IMR-90 (cell line): ENCODE measurements at regions of chr2 and their contacts with region 1.

Region 1: GRCh38 chr2:217510771-217511291 is 492.0 kb downstream of the TNS1 start:
- DNase-seq: peak; percentile 93
- ATAC-seq: peak; percentile 93
- H3K4me3 ChIP-seq: no peak overlapping the region
- H3K27ac ChIP-seq: peak overlapping the region; percentile 87
- H3K4me1 ChIP-seq: peaks cover 17% of the 10 kb centered on the region
- H3K27me3 ChIP-seq: no peaks in the 10 kb centered on the region
- CTCF ChIP-seq: peak; percentile 91
- POLR2A ChIP-seq: 0 out of 2 replicates have a peak, but pooled peaks have one; percentile 28
- RAD21 ChIP-seq: peak; percentile 97

Region 2: GRCh38 chr2:216519154-216519762 is 991.6 kb before region 1 on chr2:
- CTCF ChIA-PET with region 1: no interaction called
- POLR2A ChIA-PET with region 1: no interaction called
- dilution Hi-C with region 1: loop called (anchors 25 kb)
- in situ Hi-C with region 1: loop called (anchors 25 kb)
- intact Hi-C with region 1: no loop called
- DNase-seq: peak; percentile 89
- ATAC-seq: peak; percentile 85
- H3K4me3 ChIP-seq: no peak overlapping the region
- H3K27ac ChIP-seq: no peak overlapping the region
- H3K4me1 ChIP-seq: peaks cover 7% of the 10 kb centered on the region
- H3K27me3 ChIP-seq: no peaks in the 10 kb centered on the region
- CTCF ChIP-seq: peak; percentile 80
- POLR2A ChIP-seq: no peak
- RAD21 ChIP-seq: peak; percentile 86

Region 3: DNA sequence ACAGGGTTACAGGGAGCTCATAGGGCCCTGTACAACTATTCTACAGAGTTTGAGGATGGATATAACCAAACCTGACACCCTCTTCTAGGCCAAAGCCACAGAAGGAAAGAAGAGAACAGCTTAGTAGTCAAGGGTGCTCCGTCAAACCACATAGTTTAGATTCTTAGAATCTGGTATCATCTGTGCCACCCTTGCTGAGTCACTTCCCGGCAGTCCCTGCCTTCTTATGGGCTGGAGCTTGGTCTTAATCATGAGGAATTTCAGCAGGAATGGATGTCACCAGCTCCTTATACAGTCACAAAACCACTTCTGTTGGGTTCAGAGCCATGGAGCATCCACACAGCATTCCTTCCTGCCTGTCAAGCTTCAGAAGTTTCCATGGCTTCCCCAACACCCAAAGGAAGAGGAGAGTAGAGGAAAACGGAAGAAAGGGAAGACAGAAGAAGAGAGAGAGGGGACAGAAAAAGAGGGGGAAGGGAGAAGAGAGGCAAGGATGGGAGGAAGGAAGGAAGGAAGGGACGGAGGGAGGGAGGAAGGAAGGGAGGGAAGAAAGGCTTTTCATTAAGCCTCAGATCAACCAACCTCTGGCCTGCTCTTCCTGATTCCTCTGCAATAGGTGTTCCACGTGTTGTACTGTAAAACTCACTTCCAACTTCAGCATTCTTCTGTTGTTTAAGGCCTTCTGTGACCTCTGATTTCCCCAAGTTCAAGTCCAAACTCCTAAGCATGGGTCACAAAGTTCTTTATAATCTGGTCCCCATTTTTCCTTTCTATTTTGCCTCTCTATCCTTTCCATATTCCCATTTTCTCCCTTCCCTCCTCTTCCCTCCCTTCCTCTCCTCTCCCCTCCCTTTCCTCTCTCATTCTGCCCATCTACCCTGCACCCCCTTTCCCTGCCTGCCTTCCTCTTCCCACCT is 404.8 kb before region 1 on chr2:
- CTCF ChIA-PET with region 1: no interaction called
- POLR2A ChIA-PET with region 1: no interaction called
- dilution Hi-C with region 1: no loop called
- in situ Hi-C with region 1: no loop called
- intact Hi-C with region 1: loop called (anchors 1 kb)
- DNase-seq: peak; percentile 95
- ATAC-seq: peak; percentile 86
- H3K4me3 ChIP-seq: no peak overlapping the region
- H3K27ac ChIP-seq: peak overlapping the region; percentile 99
- H3K4me1 ChIP-seq: peaks cover 23% of the 10 kb centered on the region
- H3K27me3 ChIP-seq: no peaks in the 10 kb centered on the region
- CTCF ChIP-seq: no peak
- POLR2A ChIP-seq: peak; percentile 68; the same call in 1 of the 2 replicates
- RAD21 ChIP-seq: peak; percentile 11; the same call in 1 of the 2 replicates

Region 4: DNA sequence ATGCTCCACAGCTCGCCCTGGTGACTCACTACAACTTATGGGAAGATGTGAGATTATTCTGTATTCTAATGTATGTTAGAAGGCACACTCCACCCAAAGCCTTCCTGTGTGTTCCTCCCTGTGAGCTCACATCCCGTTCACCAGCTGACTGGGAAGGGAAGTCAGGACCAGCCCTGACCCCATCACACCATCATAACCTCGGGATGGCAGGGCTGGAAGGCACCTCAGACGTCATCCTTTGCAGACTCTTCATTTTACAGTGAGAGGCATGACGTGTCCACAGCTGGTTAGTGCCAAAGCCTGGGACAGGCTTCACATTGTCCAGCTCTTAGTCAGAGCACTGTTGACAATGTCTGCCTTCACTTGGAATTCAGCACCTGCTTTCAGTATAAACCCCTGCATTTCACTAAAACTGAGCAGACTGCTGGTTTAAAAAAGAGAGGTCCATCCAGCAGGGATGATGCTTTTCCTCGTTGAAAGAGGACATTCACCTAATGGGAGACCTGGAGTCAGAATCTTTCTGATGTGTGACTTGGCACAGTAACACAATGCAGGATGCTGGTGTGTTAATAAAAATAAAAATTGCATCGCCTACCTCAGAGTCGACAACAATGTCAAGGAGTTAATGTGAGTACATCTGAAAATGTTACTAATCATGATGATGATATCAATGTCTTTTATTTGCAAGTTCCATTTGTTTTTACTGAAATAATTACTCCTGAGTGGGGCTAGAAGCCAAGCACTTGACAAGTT is 233.0 kb before region 1 on chr2:
- CTCF ChIA-PET with region 1: no interaction called
- POLR2A ChIA-PET with region 1: no interaction called
- dilution Hi-C with region 1: no loop called
- in situ Hi-C with region 1: loop called (anchors 10 kb)
- intact Hi-C with region 1: loop called (anchors 2 kb)
- DNase-seq: peak; percentile 100
- ATAC-seq: peak; percentile 77
- H3K4me3 ChIP-seq: peak overlapping the region; percentile 22; the same call in 1 of the 2 replicates
- H3K27ac ChIP-seq: peak overlapping the region; percentile 91
- H3K4me1 ChIP-seq: peaks cover 13% of the 10 kb centered on the region
- H3K27me3 ChIP-seq: no peaks in the 10 kb centered on the region
- CTCF ChIP-seq: no peak
- POLR2A ChIP-seq: peak; percentile 50; the same call in 1 of the 2 replicates
- RAD21 ChIP-seq: peak; percentile 20; the same call in 1 of the 2 replicates

Region 5: GRCh38 chr2:217382794-217383193 is 128.0 kb before region 1 on chr2:
- CTCF ChIA-PET with region 1: no interaction called
- POLR2A ChIA-PET with region 1: no interaction called
- dilution Hi-C with region 1: no loop called
- in situ Hi-C with region 1: no loop called
- intact Hi-C with region 1: loop called (anchors 5 kb)
- DNase-seq: no peak
- ATAC-seq: no peak
- H3K4me3 ChIP-seq: no peak overlapping the region
- H3K27ac ChIP-seq: peak overlapping the region; percentile 79
- H3K4me1 ChIP-seq: peaks cover 20% of the 10 kb centered on the region
- H3K27me3 ChIP-seq: no peaks in the 10 kb centered on the region
- CTCF ChIP-seq: no peak
- POLR2A ChIP-seq: no peak
- RAD21 ChIP-seq: no peak

Region 6: GRCh38 chr2:217527590-217528202 is 16.9 kb after region 1 on chr2:
- CTCF ChIA-PET with region 1: no interaction called
- POLR2A ChIA-PET with region 1: no interaction called
- dilution Hi-C with region 1: no loop called
- in situ Hi-C with region 1: no loop called
- intact Hi-C with region 1: no loop called
- DNase-seq: peak; percentile 52
- ATAC-seq: peak; percentile 37; the same call in 1 of the 2 replicates
- H3K4me3 ChIP-seq: no peak overlapping the region
- H3K27ac ChIP-seq: no peak overlapping the region
- H3K4me1 ChIP-seq: no peaks in the 10 kb centered on the region
- H3K27me3 ChIP-seq: peaks cover 12% of the 10 kb centered on the region
- CTCF ChIP-seq: no peak
- POLR2A ChIP-seq: no peak
- RAD21 ChIP-seq: no peak

Region 7: DNA sequence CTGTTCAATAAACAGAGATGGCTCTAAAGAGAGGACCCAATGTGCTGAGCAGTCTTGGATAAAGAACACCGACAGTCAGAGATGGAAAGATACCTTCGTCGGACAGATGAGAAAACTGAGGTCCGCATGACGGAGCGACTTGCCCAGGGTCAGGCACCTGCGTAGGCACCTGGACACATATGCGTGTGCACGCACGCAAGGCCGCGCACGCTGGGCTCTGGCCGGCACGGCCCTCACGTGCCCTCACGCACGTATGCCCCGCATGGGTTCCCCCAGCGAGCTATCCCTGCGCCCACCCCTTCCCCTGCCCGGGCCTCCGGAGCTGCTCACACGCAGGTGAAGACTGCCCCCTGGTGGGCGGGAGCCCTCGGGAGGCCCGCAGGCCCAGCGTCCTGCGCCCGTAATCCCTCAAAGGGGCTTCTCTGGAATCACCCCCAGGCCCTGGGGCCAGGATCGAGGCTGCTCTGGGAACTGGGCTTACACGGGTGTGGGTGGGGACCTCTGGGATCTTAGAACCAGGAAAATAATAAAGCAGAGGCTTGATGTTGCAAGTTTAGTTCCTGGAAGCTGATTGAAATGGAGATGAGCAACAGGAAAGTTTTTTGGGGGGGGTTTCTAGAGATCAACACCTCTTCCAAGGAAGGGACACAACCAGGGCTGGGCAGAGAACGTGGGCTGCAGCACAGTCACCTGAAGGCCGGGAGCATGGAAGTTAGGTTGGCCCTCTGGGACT is 245.7 kb after region 1 on chr2:
- CTCF ChIA-PET with region 1: interaction called, 4 read pairs
- POLR2A ChIA-PET with region 1: no interaction called
- dilution Hi-C with region 1: no loop called
- in situ Hi-C with region 1: no loop called
- intact Hi-C with region 1: loop called (anchors 2 kb)
- DNase-seq: peak; percentile 64
- ATAC-seq: peak; percentile 94
- H3K4me3 ChIP-seq: no peak overlapping the region
- H3K27ac ChIP-seq: peak overlapping the region; percentile 29; the same call in 1 of the 2 replicates
- H3K4me1 ChIP-seq: peaks cover 10% of the 10 kb centered on the region
- H3K27me3 ChIP-seq: no peaks in the 10 kb centered on the region
- CTCF ChIP-seq: peak; percentile 78
- POLR2A ChIP-seq: no peak
- RAD21 ChIP-seq: peak; percentile 82